Transverse colon (tissue), 4 donors: ENCODE measurements at regions of chr12 and their contacts with region 1.

Region 1: DNA sequence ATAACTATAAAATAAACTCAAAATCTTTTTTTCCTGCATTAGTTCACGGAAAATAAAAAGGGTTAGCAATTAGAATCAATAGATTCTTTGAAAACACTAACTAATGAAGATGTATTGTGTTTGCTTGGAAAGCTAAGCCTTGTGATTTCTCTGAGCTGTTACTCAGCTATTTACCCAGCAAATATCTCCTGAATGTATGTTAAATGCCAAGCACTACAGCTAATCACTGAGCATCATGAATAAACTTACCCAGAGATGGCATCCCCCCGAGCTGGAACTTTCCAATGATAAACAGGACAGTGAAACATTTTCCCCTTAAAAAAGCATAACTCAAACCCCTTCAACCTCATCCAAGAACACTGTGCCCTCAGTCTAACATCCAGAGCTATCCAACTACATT is 71.2 kb downstream of the SLC2A13 start:
- DNase-seq: no peak
- H3K4me3 ChIP-seq: no peak overlapping the region
- H3K27ac ChIP-seq: no peak overlapping the region
- H3K4me1 ChIP-seq: peaks cover 0 to 29% (median 16%) of the 10 kb centered on the region in 4 donors
- H3K27me3 ChIP-seq: no peaks in the 10 kb centered on the region
- CTCF ChIP-seq: no peak
- EP300 ChIP-seq: no peak
- POLR2A ChIP-seq: no peak

Region 2: DNA sequence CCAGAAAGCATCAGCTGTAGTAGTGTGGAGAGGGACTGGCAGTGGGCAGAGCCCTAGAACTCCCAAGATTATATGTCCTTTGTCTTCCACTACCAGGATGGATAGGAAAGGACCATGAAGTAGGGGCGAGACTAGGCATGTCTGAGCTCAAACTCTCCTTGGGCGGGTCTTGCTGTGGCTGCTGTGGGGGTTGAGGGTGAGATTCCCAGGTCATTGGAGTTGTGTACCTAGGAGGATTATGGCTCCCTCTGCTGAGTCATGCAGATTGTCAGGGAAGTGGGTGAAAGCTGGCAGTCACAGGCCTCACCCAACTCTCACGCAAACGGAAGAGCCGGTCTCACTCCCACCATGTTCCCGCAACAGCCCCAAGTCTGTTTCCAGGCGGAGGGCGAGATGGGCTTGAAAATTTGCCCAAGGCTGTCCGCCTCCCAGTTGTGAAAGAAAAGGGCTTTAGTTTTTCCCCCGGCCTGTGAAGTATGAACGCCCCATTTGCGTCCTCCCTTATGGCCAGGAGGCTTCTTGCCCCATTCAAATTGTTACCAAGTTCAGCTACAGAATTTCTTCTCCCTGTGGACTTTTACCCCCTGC is 88.3 kb before region 1 on chr12:
- in situ Hi-C with region 1: no loop called
- intact Hi-C with region 1: no loop called
- DNase-seq: no peak
- H3K4me3 ChIP-seq: no peak overlapping the region
- H3K27ac ChIP-seq: no peak overlapping the region
- H3K4me1 ChIP-seq: no peaks in the 10 kb centered on the region
- H3K27me3 ChIP-seq: no peaks in the 10 kb centered on the region
- CTCF ChIP-seq: no peak
- EP300 ChIP-seq: no peak
- POLR2A ChIP-seq: no peak

Region 3: GRCh38 chr12:40086471-40086870 is 51.8 kb after region 1 on chr12:
- in situ Hi-C with region 1: no loop called
- intact Hi-C with region 1: loop called (anchors 2 kb)
- DNase-seq: no peak
- H3K4me3 ChIP-seq: no peak overlapping the region
- H3K27ac ChIP-seq: no peak overlapping the region
- H3K4me1 ChIP-seq: no peaks in the 10 kb centered on the region
- H3K27me3 ChIP-seq: no peaks in the 10 kb centered on the region
- CTCF ChIP-seq: no peak
- EP300 ChIP-seq: no peak
- POLR2A ChIP-seq: no peak